ENCODE measurements at regions of chr17 and their contacts with region 1.

Region 1: GRCh38 chr17:48878918-48879898 is 13.4 kb upstream of the ATP5MC1 start:
- DNase-seq: peak; percentile 58
- H3K4me3 Mint-ChIP-seq: no peak overlapping the region
- H3K27ac Mint-ChIP-seq: no peak overlapping the region
- H3K4me1 Mint-ChIP-seq: peaks cover 24% of the 10 kb centered on the region
- H3K27me3 Mint-ChIP-seq: peaks cover 3% of the 10 kb centered on the region

Region 2: GRCh38 chr17:48671697-48672171 is 207.5 kb before region 1 on chr17:
- CTCF ChIA-PET with region 1: interaction called, 12 read pairs
- POLR2A ChIA-PET with region 1: no interaction called
- DNase-seq: peak; percentile 67
- H3K4me3 Mint-ChIP-seq: no peak overlapping the region
- H3K27ac Mint-ChIP-seq: no peak overlapping the region
- H3K4me1 Mint-ChIP-seq: peaks cover 3% of the 10 kb centered on the region
- H3K27me3 Mint-ChIP-seq: peaks cover 41% of the 10 kb centered on the region

Region 3: DNA sequence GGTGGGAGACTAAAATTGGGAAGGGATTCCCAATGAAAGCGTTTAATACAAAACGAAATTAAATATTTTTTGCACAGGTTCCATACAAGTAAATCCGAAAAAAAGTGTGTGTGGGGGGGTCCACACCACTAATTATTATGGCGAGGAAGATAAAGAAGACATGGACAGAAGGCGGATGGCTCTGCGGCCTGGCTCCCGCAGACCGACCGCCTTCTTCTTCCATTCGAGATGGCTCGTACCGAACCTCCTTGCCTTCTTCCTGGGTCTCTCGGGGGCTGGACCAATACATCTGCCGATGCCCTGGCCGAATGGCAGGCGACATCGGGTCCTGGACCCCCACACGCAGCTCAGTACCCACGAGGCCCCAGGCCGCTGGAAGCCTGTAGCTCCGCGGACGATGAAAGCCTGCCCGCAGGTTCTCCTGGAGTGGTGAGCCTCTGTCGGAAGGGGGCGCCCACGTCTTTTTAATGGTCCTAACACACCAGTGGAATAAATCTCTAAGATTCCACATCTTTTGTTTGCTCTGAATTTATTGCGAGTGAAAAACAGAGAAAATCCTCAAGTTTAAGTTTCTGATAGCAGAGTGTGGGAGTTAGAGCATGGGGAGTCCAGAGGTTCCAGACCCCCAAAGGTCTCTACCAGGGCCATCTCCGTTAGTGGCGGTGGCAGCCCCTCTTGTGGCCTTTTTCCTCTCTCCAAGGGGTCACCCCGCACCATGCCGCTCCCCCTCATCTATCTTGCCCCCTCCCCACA is 154.8 kb before region 1 on chr17:
- CTCF ChIA-PET with region 1: interaction called, 31 read pairs
- POLR2A ChIA-PET with region 1: interaction called, 3 read pairs
- DNase-seq: peak; percentile 82
- H3K4me3 Mint-ChIP-seq: no peak overlapping the region
- H3K27ac Mint-ChIP-seq: no peak overlapping the region
- H3K4me1 Mint-ChIP-seq: peaks cover 36% of the 10 kb centered on the region
- H3K27me3 Mint-ChIP-seq: peaks cover 96% of the 10 kb centered on the region

Region 4: GRCh38 chr17:48799069-48799723 is 80.0 kb before region 1 on chr17:
- CTCF ChIA-PET with region 1: interaction called, 570 read pairs
- POLR2A ChIA-PET with region 1: interaction called, 4 read pairs
- DNase-seq: no peak
- H3K4me3 Mint-ChIP-seq: no peak overlapping the region
- H3K27ac Mint-ChIP-seq: no peak overlapping the region
- H3K4me1 Mint-ChIP-seq: no peaks in the 10 kb centered on the region
- H3K27me3 Mint-ChIP-seq: peaks cover 44% of the 10 kb centered on the region

Region 5: GRCh38 chr17:48825446-48826381 is 53.5 kb before region 1 on chr17:
- CTCF ChIA-PET with region 1: interaction called, 15 read pairs
- POLR2A ChIA-PET with region 1: interaction called, 4 read pairs
- DNase-seq: no peak
- H3K4me3 Mint-ChIP-seq: no peak overlapping the region
- H3K27ac Mint-ChIP-seq: no peak overlapping the region
- H3K4me1 Mint-ChIP-seq: peaks cover 9% of the 10 kb centered on the region
- H3K27me3 Mint-ChIP-seq: peaks cover 20% of the 10 kb centered on the region

Region 6: DNA sequence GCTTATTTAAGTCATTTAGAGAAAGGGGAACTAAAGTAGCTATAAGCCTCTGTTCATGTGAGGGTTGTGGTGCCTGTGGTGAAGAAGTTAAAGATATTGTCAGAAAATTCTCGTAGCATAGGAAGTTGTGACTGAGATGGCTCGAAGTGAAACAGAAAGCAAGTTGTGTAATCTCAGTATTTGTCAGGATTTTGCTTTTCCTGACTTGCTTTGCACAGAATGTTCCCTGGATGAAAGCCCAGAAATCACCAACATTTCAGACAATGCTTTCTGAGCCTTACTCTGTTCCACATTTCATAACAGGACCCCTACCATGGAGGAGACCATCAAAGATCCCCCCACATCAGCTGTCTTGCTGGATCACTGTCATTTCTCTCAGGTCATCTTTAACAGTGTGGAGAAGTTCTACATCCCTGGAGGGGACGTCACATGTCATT is 37.8 kb before region 1 on chr17:
- CTCF ChIA-PET with region 1: interaction called, 23 read pairs
- POLR2A ChIA-PET with region 1: interaction called, 5 read pairs
- DNase-seq: peak; percentile 61
- H3K4me3 Mint-ChIP-seq: peak overlapping the region; percentile 56
- H3K27ac Mint-ChIP-seq: peak overlapping the region; percentile 74
- H3K4me1 Mint-ChIP-seq: peaks cover 61% of the 10 kb centered on the region
- H3K27me3 Mint-ChIP-seq: no peaks in the 10 kb centered on the region

Region 7: GRCh38 chr17:48892940-48893645 is 13.9 kb after region 1 on chr17:
- CTCF ChIA-PET with region 1: interaction called, 23 read pairs
- POLR2A ChIA-PET with region 1: interaction called, 3 read pairs
- DNase-seq: no peak
- H3K4me3 Mint-ChIP-seq: peak overlapping the region; percentile 91
- H3K27ac Mint-ChIP-seq: peak overlapping the region; percentile 88
- H3K4me1 Mint-ChIP-seq: peaks cover 42% of the 10 kb centered on the region
- H3K27me3 Mint-ChIP-seq: no peaks in the 10 kb centered on the region

Region 8: DNA sequence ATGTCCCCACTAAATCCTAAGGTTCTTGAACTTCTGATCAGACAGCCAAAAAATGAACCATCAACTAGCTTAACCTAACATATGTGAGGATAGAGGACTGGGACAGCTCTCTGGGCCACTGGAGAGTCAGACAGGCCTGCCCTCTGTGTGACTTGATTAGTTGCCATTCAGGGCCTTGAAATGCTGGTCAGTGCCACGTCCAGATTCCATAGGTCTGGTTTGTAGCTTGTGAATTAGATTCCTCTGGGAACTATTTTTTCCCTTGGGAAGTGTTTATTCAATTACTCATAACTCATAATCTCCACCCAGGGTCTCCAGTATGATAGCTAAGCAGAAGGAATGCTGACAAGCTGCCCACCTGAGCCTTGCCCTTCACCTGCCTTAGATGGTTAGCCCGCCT is 166.2 kb after region 1 on chr17:
- CTCF ChIA-PET with region 1: no interaction called
- POLR2A ChIA-PET with region 1: no interaction called
- DNase-seq: no peak
- H3K4me3 Mint-ChIP-seq: no peak overlapping the region
- H3K27ac Mint-ChIP-seq: no peak overlapping the region
- H3K4me1 Mint-ChIP-seq: no peaks in the 10 kb centered on the region
- H3K27me3 Mint-ChIP-seq: peaks cover 11% of the 10 kb centered on the region